Activated T-helper 1 cell treated with anti-CD3 and anti-CD28 coated beads, Interleukin-12 subunit alpha, Interleukin-12 subunit beta, Interleukin-2, Interleukin-4 antibody, amounts not matched to agents 30 ng/mL and 10 ng/mL and 1 ng/mL, durations not matched to agents 14 hours and 24 hours and 36 hours (primary cell): ENCODE measurements at regions of chr1 and their contacts with region 1.

Region 1: DNA sequence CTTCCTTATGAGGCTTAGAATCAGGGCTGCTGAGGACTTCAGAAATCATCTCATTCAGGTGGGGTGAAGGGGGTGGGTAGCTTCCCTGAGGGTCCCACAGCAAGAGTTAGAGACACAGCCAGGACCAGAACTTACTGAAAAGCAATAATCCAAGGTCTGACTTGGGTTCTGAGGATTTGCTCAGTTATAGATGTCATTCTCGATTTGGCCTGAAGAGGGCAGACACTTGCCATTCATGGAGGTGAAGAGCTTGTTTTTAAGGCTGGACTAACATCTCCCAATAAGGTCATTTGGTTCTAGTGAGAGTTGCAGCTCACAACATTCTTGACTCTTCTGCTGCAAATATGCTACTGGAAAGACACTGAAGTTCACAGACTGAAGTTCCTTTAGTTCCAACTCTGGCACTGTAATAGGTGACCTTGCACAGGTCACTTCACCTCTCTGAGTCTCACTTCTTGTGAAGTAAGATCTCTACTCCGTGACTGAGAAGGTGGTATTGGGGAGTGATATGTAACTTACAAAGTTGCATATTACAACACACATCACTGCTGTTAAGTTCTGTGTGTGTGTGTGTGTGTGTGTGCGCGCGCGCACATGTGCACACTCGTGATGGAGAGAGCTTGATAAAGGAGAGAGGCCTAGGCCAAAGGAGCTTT is 69.8 kb upstream of the DIRAS3 start:
- DNase-seq: peak; percentile 2
- H3K4me3 Mint-ChIP-seq: no peak overlapping the region
- H3K27ac Mint-ChIP-seq: no peak overlapping the region
- H3K4me1 Mint-ChIP-seq: peaks cover 5% of the 10 kb centered on the region
- H3K27me3 Mint-ChIP-seq: peaks cover 2% of the 10 kb centered on the region

Region 2: GRCh38 chr1:67766141-67766978 is 353.9 kb before region 1 on chr1:
- intact Hi-C with region 1: loop called (anchors 1 kb)
- DNase-seq: no peak
- H3K4me3 Mint-ChIP-seq: no peak overlapping the region
- H3K27ac Mint-ChIP-seq: no peak overlapping the region
- H3K4me1 Mint-ChIP-seq: peaks cover 27% of the 10 kb centered on the region
- H3K27me3 Mint-ChIP-seq: peaks cover 34% of the 10 kb centered on the region

Region 3: DNA sequence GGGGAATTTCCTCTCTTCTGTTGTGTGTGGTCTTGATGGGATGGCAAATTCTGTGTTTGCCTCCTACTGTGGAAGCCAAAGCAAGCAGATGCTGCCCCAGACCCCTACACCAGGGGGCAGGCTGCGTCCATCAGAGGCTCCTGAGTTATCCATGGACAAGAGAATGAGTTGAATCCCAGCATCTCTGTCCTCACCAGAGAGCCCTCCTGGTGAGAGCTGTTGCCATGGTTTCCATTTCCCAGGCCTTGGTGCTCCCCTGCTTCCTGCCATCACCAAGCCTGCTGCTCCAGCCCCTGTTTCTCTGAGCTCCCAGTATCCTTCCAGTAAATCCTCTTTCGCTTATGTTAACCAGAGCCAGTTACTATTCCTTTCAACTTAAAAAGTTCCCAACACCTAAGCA is 266.6 kb before region 1 on chr1:
- intact Hi-C with region 1: loop called (anchors 2 kb)
- DNase-seq: no peak
- H3K4me3 Mint-ChIP-seq: no peak overlapping the region
- H3K27ac Mint-ChIP-seq: no peak overlapping the region
- H3K4me1 Mint-ChIP-seq: no peaks in the 10 kb centered on the region
- H3K27me3 Mint-ChIP-seq: peaks cover 9% of the 10 kb centered on the region

Region 4: GRCh38 chr1:68141071-68142021 is 21.1 kb after region 1 on chr1:
- intact Hi-C with region 1: no loop called
- DNase-seq: no peak
- H3K4me3 Mint-ChIP-seq: no peak overlapping the region
- H3K27ac Mint-ChIP-seq: no peak overlapping the region
- H3K4me1 Mint-ChIP-seq: no peaks in the 10 kb centered on the region
- H3K27me3 Mint-ChIP-seq: peaks cover 1% of the 10 kb centered on the region

Region 5: GRCh38 chr1:68293609-68294366 is 173.5 kb after region 1 on chr1:
- intact Hi-C with region 1: no loop called
- DNase-seq: no peak
- H3K4me3 Mint-ChIP-seq: no peak overlapping the region
- H3K27ac Mint-ChIP-seq: no peak overlapping the region
- H3K4me1 Mint-ChIP-seq: no peaks in the 10 kb centered on the region
- H3K27me3 Mint-ChIP-seq: peaks cover 3% of the 10 kb centered on the region

Region 6: GRCh38 chr1:68346188-68346808 is 226.0 kb after region 1 on chr1:
- intact Hi-C with region 1: loop called (anchors 1 kb)
- DNase-seq: no peak
- H3K4me3 Mint-ChIP-seq: no peak overlapping the region
- H3K27ac Mint-ChIP-seq: no peak overlapping the region
- H3K4me1 Mint-ChIP-seq: no peaks in the 10 kb centered on the region
- H3K27me3 Mint-ChIP-seq: no peaks in the 10 kb centered on the region

Region 7: GRCh38 chr1:68442822-68443556 is 322.7 kb after region 1 on chr1:
- intact Hi-C with region 1: loop called (anchors 1 kb)
- DNase-seq: no peak
- H3K4me3 Mint-ChIP-seq: no peak overlapping the region
- H3K27ac Mint-ChIP-seq: no peak overlapping the region
- H3K4me1 Mint-ChIP-seq: no peaks in the 10 kb centered on the region
- H3K27me3 Mint-ChIP-seq: peaks cover 1% of the 10 kb centered on the region

Region 8: DNA sequence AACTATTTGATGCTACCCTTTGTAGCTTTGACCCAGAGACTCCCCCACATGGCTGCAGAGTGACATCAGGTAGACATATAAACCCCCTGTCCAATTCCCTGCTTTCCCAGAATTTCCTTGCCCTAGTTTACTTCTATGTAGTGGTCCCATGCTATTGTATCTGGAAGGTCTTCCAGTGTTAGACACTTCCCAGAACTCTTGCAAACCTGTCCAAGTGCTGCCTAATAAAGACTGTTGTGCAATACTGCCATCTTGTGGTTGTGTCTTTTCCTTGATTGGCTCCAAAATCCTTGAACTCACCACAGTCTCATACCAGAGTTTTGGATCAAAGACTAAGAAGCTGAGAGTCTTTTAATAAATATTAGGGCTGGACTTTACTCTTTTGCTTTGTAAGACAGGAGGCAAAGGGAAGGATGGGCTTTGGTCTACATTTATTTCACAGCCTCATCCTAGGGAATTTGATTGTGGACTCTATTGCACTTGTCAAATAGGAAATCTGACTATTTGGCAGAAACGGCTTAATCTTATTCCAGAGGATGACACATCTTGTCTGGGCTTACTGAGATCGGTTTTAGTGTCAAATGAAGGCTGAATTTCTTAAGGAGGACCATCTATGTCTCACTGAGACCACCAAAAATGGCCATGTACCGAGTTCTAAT is 1617.4 kb after region 1 on chr1:
- intact Hi-C with region 1: loop called (anchors 1 kb)
- DNase-seq: peak; percentile 6
- H3K4me3 Mint-ChIP-seq: no peak overlapping the region
- H3K27ac Mint-ChIP-seq: no peak overlapping the region
- H3K4me1 Mint-ChIP-seq: no peaks in the 10 kb centered on the region
- H3K27me3 Mint-ChIP-seq: no peaks in the 10 kb centered on the region